Panc1 (cell line): ENCODE measurements at regions of chr18 and their contacts with region 1.

Region 1: GRCh38 chr18:75977081-75977480 is 518.0 kb downstream of the ZNF516 start:
- DNase-seq: no peak
- ATAC-seq: no peak
- H3K4me3 ChIP-seq: no peak overlapping the region
- H3K27ac ChIP-seq: no peak overlapping the region
- H3K4me1 ChIP-seq: no peaks in the 10 kb centered on the region
- H3K27me3 ChIP-seq: peaks cover 2% of the 10 kb centered on the region; the same call in 1 of the 2 replicates
- CTCF ChIP-seq: no peak

Region 2: DNA sequence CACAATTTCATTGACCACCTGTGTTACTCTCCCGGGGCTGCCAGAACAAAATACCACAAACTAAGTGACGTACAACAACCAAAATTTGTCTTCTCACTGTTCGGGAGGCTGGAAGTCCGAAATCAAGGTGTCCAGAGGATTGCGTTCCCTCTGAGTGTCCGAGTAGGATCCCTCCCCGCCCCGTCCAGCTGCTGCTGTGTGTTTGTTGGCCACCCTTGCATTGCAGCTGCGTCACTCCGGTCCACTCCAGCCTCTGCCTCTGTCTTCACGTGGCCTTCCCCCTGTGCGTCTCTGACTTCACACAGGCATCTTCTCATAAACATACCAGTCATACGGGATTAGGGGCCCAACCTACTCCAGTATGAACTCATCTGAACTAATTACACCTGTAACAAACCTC is 297.8 kb before region 1 on chr18:
- CTCF ChIA-PET with region 1: no interaction called
- POLR2A ChIA-PET with region 1: no interaction called
- in situ Hi-C with region 1: no loop called
- intact Hi-C with region 1: no loop called
- DNase-seq: no peak
- ATAC-seq: no peak
- H3K4me3 ChIP-seq: no peak overlapping the region
- H3K27ac ChIP-seq: no peak overlapping the region
- H3K4me1 ChIP-seq: no peaks in the 10 kb centered on the region
- H3K27me3 ChIP-seq: peaks cover 3% of the 10 kb centered on the region
- CTCF ChIP-seq: no peak

Region 3: DNA sequence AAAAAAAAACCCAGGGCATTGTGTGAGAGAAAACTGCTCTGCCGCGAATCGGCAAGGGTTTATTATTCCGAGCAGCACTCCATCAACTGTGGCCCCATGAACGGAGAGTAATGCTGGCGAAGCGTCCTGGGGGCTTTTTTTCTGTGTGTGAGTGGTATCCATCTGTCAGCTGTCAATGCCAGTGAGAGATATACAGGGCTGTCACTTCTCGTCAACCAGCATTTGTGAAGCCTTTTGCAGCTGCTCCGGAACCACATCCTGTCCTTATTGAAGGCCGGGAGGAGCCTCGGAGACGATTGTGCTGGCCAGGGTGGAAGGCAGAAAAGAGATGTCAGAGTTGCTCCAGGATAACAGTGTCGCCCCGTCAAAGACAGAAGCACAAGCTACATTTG is 192.7 kb before region 1 on chr18:
- CTCF ChIA-PET with region 1: no interaction called
- POLR2A ChIA-PET with region 1: no interaction called
- in situ Hi-C with region 1: no loop called
- intact Hi-C with region 1: no loop called
- DNase-seq: no peak
- ATAC-seq: 0 out of 2 replicates have a peak, but pooled peaks have one; percentile 31
- H3K4me3 ChIP-seq: no peak overlapping the region
- H3K27ac ChIP-seq: no peak overlapping the region
- H3K4me1 ChIP-seq: no peaks in the 10 kb centered on the region
- H3K27me3 ChIP-seq: peaks cover 24% of the 10 kb centered on the region
- CTCF ChIP-seq: no peak

Region 4: GRCh38 chr18:75926811-75927210 is 50.3 kb before region 1 on chr18:
- CTCF ChIA-PET with region 1: no interaction called
- POLR2A ChIA-PET with region 1: no interaction called
- in situ Hi-C with region 1: no loop called
- intact Hi-C with region 1: no loop called
- DNase-seq: no peak
- ATAC-seq: no peak
- H3K4me3 ChIP-seq: no peak overlapping the region
- H3K27ac ChIP-seq: no peak overlapping the region
- H3K4me1 ChIP-seq: no peaks in the 10 kb centered on the region
- H3K27me3 ChIP-seq: no peaks in the 10 kb centered on the region
- CTCF ChIP-seq: no peak

Region 5: DNA sequence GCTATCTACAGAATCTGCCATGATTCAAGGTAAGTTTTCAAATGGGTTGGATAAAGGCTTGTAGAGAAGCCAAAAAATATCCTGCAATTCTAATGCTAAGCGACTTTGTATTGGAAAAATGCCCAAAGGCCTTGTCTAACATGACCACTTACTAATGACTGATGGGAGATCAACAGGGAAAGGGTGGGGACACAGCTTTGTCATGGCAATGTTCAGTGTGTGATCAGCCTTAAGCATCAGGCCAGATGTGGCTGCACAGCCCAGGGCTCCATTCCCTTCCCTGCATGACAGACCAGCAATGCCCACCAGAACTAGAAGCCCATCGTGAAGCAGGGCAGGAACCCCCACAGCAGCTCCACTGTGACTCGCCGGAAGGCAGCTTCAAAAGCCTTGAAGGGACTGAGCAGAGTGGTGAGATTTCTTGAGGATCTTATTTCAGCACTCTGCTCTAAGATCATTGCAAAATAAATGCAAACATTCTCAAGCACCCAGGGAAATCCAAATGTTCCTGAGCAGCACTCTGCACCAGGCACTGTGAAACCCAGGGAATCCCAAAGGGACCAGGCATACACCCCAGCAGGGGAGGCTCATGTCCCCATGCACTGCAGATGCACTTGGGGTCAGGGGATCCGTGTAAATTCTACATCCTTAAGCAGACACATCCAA is 31.7 kb before region 1 on chr18:
- CTCF ChIA-PET with region 1: interaction called, 11 read pairs
- POLR2A ChIA-PET with region 1: no interaction called
- in situ Hi-C with region 1: no loop called
- intact Hi-C with region 1: no loop called
- DNase-seq: no peak
- ATAC-seq: no peak
- H3K4me3 ChIP-seq: no peak overlapping the region
- H3K27ac ChIP-seq: no peak overlapping the region
- H3K4me1 ChIP-seq: no peaks in the 10 kb centered on the region
- H3K27me3 ChIP-seq: no peaks in the 10 kb centered on the region
- CTCF ChIP-seq: no peak

Region 6: GRCh38 chr18:76005632-76006208 is 28.6 kb after region 1 on chr18:
- CTCF ChIA-PET with region 1: no interaction called
- POLR2A ChIA-PET with region 1: no interaction called
- in situ Hi-C with region 1: no loop called
- intact Hi-C with region 1: no loop called
- DNase-seq: no peak
- ATAC-seq: peak; percentile 53
- H3K4me3 ChIP-seq: peak overlapping the region in 1 of 2 experiments; percentile 2; a peak in 1 of 4 replicates
- H3K27ac ChIP-seq: no peak overlapping the region
- H3K4me1 ChIP-seq: no peaks in the 10 kb centered on the region
- H3K27me3 ChIP-seq: no peaks in the 10 kb centered on the region
- CTCF ChIP-seq: no peak